Tibial artery (tissue), 4 donors: ENCODE measurements at regions of chr22 and their contacts with region 1.

Region 1: DNA sequence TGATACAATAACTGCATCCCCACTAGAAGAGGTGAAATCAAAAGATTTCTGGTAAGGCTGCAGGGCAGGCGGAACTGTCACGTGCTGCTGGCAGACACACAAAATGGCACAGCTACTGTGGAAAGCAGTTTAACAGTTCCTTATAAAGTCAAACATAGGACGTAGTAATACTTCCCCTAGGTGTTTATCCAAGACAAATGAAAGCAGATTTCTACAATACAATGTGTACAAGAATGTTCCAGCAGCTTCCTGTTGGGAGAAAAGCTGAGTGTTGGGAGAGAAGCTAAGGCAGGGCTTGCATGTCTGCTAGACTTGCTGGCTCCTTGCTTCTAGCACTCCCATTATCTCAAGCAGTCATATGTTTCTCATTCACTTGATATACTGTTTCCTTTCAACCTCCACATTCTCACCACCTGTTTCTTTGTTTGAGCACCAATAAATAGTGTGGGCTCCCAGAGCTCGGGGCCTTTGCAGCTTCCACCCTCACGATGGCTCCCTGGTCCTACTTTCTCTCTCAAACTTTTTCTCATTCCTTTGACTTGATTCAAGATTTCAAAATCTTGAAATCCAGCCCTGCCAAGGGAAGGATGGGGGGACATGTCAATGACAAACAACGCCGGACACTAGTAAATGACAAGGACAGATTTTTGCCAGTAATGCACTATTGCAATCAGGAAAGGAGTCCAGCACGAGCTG is 21.2 kb upstream of the IL17RA start:
- DNase-seq: peak in 1 of 2 donors; percentile 32
- H3K4me3 ChIP-seq: no peak overlapping the region
- H3K27ac ChIP-seq: no peak overlapping the region
- H3K4me1 ChIP-seq: peaks cover 0 to 9% (median 0%) of the 10 kb centered on the region in 4 donors
- H3K27me3 ChIP-seq: peaks cover 0 to 49% of the 10 kb centered on the region in 2 donors
- CTCF ChIP-seq: no peak

Region 2: DNA sequence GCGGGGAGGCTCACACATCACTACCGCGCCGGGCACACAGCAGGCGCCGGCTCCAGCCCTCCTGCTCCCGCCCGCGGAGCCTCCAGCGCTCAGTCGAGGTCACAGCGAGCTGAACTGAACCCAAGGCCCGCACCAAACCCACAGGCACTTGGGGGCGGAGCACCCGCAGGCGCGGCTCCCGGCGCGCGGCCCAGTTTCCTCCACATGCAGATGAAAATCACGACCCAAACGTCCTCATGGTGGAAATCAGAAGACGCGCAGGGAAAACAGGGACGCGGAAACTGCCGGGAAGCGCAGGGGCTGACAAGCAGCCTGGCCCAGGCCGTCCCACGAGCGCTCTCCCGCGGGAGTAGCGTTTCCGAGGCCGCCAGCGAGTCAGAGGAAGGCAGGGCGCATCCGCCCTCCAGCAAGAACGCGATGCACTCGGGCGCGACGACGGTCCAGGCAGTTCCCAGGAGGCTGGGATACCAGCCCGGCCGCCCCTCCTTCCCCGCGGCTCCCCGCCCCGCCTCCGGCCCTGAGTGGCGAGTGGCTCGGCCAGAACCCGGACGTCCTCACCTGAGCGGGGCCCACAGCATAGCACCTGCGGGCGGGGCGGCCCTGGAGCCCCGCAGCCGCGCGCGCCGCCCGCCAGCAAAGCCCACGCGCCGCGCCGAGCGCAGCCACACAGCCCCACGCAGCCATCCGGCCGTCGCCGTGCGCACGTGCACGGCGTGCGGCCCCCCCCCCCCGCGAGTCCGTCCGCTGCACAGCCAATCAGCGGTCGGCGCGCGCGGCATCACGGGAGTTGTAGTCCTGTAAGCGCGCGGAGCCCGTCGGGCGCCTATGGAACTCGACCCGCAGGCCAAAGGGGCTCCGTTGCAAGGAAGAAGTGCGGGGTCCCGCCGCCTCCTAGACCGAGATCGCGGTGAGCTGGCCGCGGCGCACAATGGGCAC is 95.3 kb after region 1 on chr22 and contains the start of gene HDHD5:
- intact Hi-C with region 1: no loop called
- DNase-seq: peak; percentile 91 to 93
- H3K4me3 ChIP-seq: peak within 1 kb of the TSS; percentile 65 to 86
- H3K27ac ChIP-seq: peak within 1 kb of the TSS; percentile 90 to 93
- H3K4me1 ChIP-seq: peaks cover 0 to 38% (median 19%) of the 10 kb centered on the region in 4 donors
- H3K27me3 ChIP-seq: no peaks in the 10 kb centered on the region
- CTCF ChIP-seq: no peak

Region 3: GRCh38 chr22:17501679-17502285 is 438.2 kb after region 1 on chr22:
- intact Hi-C with region 1: loop called (anchors 10 kb)
- DNase-seq: no peak
- H3K4me3 ChIP-seq: no peak overlapping the region
- H3K27ac ChIP-seq: no peak overlapping the region
- H3K4me1 ChIP-seq: no peaks in the 10 kb centered on the region
- H3K27me3 ChIP-seq: peaks cover 0 to 10% of the 10 kb centered on the region in 2 donors
- CTCF ChIP-seq: peak; percentile 44 to 54